ENCODE measurements at regions of chr18 and their contacts with region 1.

Region 1: DNA sequence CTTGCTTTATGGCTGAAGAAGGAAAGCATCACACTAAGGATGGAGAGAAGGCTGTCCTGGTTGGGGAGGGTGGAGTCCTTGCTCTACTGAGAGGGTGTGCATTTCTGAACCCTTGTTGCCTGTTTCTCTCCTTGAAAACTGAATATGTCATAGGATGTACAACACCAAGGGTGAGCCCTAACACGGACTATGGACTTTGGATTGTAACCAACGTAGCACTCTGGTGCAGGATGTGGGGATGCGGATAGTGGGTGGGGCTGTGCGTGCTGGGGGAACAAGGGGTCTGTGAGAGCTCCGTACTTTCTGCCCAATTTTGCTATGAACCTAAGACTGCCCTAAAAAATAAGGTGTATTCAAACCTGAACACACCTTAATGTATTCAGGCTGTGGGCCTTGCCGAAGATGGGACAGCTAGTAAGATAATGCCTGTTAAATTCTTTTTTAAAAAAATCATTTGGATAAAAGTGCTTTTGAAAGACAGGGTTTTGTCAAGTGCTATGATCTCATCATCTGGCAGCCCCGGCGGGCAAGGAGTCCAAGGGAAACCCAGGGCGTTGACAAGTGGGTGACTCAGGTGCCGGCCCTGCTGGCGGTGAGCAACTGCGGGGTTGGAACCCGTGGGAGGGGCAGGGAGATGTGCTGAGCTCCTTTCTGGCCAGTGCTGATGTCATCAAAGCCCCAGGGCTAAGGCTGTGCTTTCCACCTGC is 54.0 kb downstream of the GATA6 start:
- DNase-seq: peak; percentile 92
- H3K4me3 ChIP-seq: no peak overlapping the region
- H3K27ac ChIP-seq: no peak overlapping the region
- H3K4me1 ChIP-seq: peaks cover 16% of the 10 kb centered on the region
- H3K27me3 ChIP-seq: no peaks in the 10 kb centered on the region
- CTCF ChIP-seq: no peak

Region 2: DNA sequence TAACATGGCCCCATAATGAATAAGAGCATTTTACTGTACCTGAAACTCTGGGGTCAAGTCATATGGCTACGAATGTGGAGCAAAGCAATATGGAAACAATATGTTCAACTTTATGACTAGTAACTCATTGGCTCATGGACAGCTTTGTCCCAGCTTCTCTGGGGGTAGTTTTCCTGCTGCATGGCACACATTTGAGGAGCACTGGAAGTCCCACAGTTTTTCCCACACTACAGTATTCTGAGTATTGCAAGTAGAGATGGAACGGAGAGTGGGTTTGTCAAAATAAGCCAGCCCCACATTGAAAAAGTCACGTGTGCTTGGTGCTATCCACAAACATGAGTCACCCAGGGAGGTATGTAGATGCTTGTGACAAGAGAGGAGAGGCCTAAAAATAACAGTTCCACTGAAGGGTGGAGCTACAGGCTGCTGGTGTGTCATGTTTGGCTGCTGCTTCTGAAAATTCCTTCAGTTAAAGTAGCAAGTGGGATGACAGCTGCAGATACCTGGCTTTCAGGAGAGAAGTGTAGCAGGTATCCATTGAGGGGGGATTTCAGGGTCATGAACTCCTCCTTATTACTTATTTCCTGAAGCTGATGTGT is 242.6 kb after region 1 on chr18:
- CTCF ChIA-PET with region 1: no interaction called
- POLR2A ChIA-PET with region 1: no interaction called
- intact Hi-C with region 1: loop called (anchors 5 kb)
- DNase-seq: peak; percentile 50 to 91
- H3K4me3 ChIP-seq: peak overlapping the region; percentile 52; the same call in 1 of the 2 replicates
- H3K27ac ChIP-seq: peak overlapping the region; percentile 100
- H3K4me1 ChIP-seq: peaks cover 39% of the 10 kb centered on the region
- H3K27me3 ChIP-seq: no peaks in the 10 kb centered on the region
- CTCF ChIP-seq: no peak

Region 3: GRCh38 chr18:22678486-22678885 is 455.1 kb after region 1 on chr18:
- CTCF ChIA-PET with region 1: no interaction called
- POLR2A ChIA-PET with region 1: interaction called, 13 read pairs
- intact Hi-C with region 1: no loop called
- DNase-seq: no peak
- H3K4me3 ChIP-seq: no peak overlapping the region
- H3K27ac ChIP-seq: no peak overlapping the region
- H3K4me1 ChIP-seq: peaks cover 4% of the 10 kb centered on the region; the same call in 1 of the 2 replicates
- H3K27me3 ChIP-seq: no peaks in the 10 kb centered on the region
- CTCF ChIP-seq: no peak